Stomach (tissue), 19 donors: ENCODE measurements at regions of chr1 and their contacts with region 1.

Region 1: DNA sequence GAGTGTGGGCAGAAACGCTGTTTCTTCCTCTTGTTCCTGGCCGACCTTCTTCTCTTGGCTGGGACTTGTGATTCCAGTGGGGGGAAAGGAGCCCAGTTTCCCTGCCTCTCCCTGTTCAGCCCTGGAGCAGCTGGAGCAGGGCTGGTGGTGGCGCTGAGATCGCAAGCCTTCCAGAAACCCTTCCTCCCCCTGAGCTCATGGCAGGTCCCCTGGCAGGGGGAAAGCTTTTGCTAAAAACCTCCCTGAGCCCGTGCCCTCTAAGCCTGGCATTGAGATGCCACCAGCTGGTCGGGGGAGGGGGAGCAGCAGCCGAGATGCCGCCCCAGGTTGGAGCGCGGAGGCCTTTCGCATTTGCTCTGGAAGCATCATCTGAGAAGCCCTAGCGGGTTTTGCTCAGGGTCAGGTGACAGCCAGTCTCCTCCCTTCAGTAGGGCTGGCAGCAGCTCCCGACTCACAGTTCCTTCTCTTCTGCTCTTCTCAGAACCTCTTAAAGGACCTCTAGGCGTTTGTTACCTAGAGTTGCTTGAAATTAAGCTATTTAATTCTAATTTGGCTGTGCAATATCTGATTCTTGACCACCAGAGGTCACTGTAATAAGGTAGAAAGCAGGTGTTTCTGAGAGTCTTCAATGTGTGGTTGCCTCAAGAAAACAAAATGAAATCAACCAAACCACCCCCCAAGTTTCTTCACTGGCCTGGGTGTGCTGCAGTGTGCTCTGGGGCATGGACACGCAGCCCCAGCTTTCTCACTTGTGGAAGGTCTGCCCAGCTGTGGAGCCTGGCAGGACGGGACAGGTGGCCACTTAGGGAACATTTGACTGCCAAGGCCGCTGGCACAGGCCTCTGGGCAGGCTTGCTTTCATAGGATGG is 257.3 kb downstream of the CAMTA1 start:
- DNase-seq: peak in 1 of 2 donors; percentile 55
- H3K4me3 ChIP-seq: no peak overlapping the region
- H3K27ac ChIP-seq: no peak overlapping the region
- H3K4me1 ChIP-seq: no peaks in the 10 kb centered on the region
- H3K27me3 ChIP-seq: peaks cover 0 to 57% (median 6%) of the 10 kb centered on the region in 3 donors
- CTCF ChIP-seq: peak in 4 of 7 experiments; percentile 29 to 54 (median 52)
- EP300 ChIP-seq: no peak
- POLR2A ChIP-seq: no peak

Region 2: GRCh38 chr1:6858596-6858995 is 184.0 kb before region 1 on chr1:
- intact Hi-C with region 1: no loop called
- DNase-seq: no peak
- H3K4me3 ChIP-seq: no peak overlapping the region
- H3K27ac ChIP-seq: no peak overlapping the region
- H3K4me1 ChIP-seq: peaks cover 0 to 18% (median 9%) of the 10 kb centered on the region in 4 donors
- H3K27me3 ChIP-seq: no peaks in the 10 kb centered on the region
- CTCF ChIP-seq: no peak
- EP300 ChIP-seq: no peak
- POLR2A ChIP-seq: no peak

Region 3: GRCh38 chr1:7207875-7208646 is 165.5 kb after region 1 on chr1:
- intact Hi-C with region 1: loop called (anchors 10 kb)
- DNase-seq: peak; percentile 62 to 63
- H3K4me3 ChIP-seq: no peak overlapping the region
- H3K27ac ChIP-seq: no peak overlapping the region
- H3K4me1 ChIP-seq: no peaks in the 10 kb centered on the region
- H3K27me3 ChIP-seq: no peaks in the 10 kb centered on the region
- CTCF ChIP-seq: peak in 5 of 7 experiments; percentile 42 to 71 (median 63)
- EP300 ChIP-seq: no peak
- POLR2A ChIP-seq: no peak

Region 4: DNA sequence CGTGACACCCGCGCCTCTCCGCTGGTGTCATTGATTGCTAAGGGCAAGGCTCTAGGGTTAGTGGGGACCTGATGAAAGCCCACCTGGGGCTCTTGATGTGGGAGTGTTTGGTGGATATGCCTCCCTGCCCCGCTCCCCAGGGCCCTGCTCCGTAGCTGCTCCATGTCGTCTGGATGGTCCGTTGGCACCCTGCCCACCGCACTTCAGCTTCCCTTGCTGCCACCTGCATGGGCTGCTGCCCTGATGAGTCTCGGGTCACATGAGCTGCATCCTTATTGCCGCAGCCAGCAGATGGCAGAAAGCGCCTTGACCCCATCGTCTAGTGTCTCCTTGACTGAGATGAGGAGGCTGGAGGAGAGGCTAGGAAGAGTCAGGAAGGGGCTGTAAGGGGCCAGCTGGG is 182.1 kb after region 1 on chr1:
- intact Hi-C with region 1: no loop called
- DNase-seq: no peak
- H3K4me3 ChIP-seq: no peak overlapping the region
- H3K27ac ChIP-seq: no peak overlapping the region
- H3K4me1 ChIP-seq: no peaks in the 10 kb centered on the region
- H3K27me3 ChIP-seq: peaks cover 0 to 16% (median 0%) of the 10 kb centered on the region in 3 donors
- CTCF ChIP-seq: peak in 1 of 7 experiments; percentile 11
- EP300 ChIP-seq: no peak
- POLR2A ChIP-seq: no peak

Region 5: DNA sequence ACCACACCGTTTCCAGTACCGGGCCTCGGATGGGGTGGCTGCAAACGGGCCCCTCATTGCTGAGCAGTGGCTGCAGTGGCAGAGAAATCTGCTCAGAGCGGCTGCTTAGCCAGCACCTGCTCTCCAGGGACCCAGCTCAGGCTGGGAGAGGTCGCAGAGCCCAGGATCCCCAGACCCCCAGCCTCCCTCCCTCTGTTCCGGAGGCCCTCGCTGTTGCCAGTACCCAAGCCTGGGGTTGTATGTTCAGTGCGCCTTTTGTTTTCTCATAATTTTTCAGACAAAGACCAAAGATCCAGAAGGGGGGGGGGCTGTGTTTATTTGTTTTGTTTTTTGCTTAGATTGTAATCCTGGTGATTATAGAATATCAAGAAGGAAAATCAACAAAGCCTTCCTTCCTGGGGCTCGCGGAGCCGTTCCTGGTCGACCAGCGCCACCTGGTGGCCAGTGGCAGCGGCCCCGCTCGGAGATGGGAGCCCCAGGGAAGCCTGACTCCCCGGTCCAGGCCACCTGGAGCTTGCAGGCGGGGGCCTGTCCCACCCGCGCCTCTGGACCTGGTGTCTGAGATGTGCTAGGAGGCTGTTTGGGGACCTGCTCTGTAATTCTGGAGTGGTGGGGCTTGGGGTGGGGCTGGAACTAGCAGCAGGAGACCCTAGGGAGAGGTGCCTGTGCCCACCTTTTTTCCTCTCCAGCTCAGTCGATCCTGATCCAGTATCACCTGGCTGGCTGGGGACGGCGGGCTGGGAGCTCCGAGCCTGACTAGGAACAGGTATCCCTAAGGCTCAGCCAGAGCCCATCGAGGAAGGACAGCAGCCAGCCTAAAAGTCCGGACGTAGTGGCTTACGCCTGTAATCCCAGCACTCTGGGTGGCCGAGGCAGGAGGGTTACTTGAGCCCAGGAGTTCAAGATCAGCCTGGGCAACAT is 604.7 kb after region 1 on chr1:
- intact Hi-C with region 1: loop called (anchors 5 kb)
- DNase-seq: peak; percentile 83 to 85
- H3K4me3 ChIP-seq: no peak overlapping the region
- H3K27ac ChIP-seq: no peak overlapping the region
- H3K4me1 ChIP-seq: peaks cover 11 to 53% (median 31%) of the 10 kb centered on the region in 4 donors
- H3K27me3 ChIP-seq: peaks cover 0 to 8% (median 0%) of the 10 kb centered on the region in 3 donors
- CTCF ChIP-seq: peak in 5 of 7 experiments; percentile 69 to 97 (median 92)
- EP300 ChIP-seq: no peak
- POLR2A ChIP-seq: no peak